Breast epithelium (tissue), 4 donors: ENCODE measurements at regions of chr13 and their contacts with region 1.

Region 1: GRCh38 chr13:111225810-111226546 is 94.5 kb upstream of the TEX29 start:
- DNase-seq: no peak
- H3K4me3 ChIP-seq: no peak overlapping the region
- H3K27ac ChIP-seq: no peak overlapping the region
- H3K4me1 ChIP-seq: no peaks in the 10 kb centered on the region
- H3K27me3 ChIP-seq: no peaks in the 10 kb centered on the region
- CTCF ChIP-seq: no peak
- POLR2A ChIP-seq: no peak

Region 2: GRCh38 chr13:109615721-109616375 is 1610.1 kb before region 1 on chr13:
- intact Hi-C with region 1: no loop called
- DNase-seq: no peak
- H3K4me3 ChIP-seq: no peak overlapping the region
- H3K27ac ChIP-seq: no peak overlapping the region
- H3K4me1 ChIP-seq: no peaks in the 10 kb centered on the region
- H3K27me3 ChIP-seq: no peaks in the 10 kb centered on the region
- CTCF ChIP-seq: no peak
- POLR2A ChIP-seq: no peak

Region 3: GRCh38 chr13:111256946-111257345 is 31.0 kb after region 1 on chr13:
- intact Hi-C with region 1: loop called (anchors 1 kb)
- DNase-seq: no peak
- H3K4me3 ChIP-seq: no peak overlapping the region
- H3K27ac ChIP-seq: no peak overlapping the region
- H3K4me1 ChIP-seq: no peaks in the 10 kb centered on the region
- H3K27me3 ChIP-seq: no peaks in the 10 kb centered on the region
- CTCF ChIP-seq: no peak
- POLR2A ChIP-seq: no peak